Sigmoid colon (tissue), 7 donors: ENCODE measurements at regions of chr1 and their contacts with region 1.

Region 1: DNA sequence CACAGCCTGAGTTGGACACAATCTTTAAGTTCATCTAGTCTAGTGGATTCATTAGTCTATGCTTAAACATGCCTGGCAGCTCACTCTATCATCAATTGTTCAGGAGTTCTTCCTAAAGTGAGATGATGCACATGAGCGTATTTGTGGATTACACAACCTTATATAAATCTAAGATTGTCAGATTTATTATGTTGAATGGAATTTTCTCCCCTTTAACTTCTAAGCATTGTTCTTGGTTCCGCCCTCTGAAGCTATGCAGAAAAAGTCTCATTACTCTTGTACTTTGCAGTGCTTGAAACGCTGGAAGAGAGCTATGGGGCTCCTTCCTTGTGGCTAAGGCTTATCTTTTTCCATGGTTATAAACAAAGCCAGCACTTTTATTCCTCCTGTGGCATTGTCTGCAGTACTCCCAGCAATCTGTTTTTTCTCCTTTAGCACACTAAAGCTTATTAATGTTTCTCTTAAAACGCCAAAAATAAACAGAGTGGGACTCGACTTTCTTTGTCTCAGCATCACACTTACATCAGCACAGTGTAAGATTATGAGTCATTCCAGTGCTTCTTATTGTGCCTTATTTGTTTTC is 316.8 kb upstream of the CAMK1G start:
- DNase-seq: no peak
- H3K4me3 ChIP-seq: no peak overlapping the region
- H3K27ac ChIP-seq: peak overlapping the region in 2 of 4 donors; percentile 37 to 48
- H3K4me1 ChIP-seq: peaks cover 0 to 21% (median 7%) of the 10 kb centered on the region in 4 donors
- H3K27me3 ChIP-seq: no peaks in the 10 kb centered on the region
- CTCF ChIP-seq: no peak
- EP300 ChIP-seq: peak in 1 of 4 donors; percentile 40
- POLR2A ChIP-seq: no peak

Region 2: GRCh38 chr1:208595745-208596144 is 670.9 kb before region 1 on chr1:
- intact Hi-C with region 1: no loop called
- DNase-seq: no peak
- H3K4me3 ChIP-seq: no peak overlapping the region
- H3K27ac ChIP-seq: no peak overlapping the region
- H3K4me1 ChIP-seq: peaks cover 0 to 8% (median 2%) of the 10 kb centered on the region in 4 donors
- H3K27me3 ChIP-seq: no peaks in the 10 kb centered on the region
- CTCF ChIP-seq: no peak
- EP300 ChIP-seq: no peak
- POLR2A ChIP-seq: no peak

Region 3: GRCh38 chr1:209354111-209354839 is 87.6 kb after region 1 on chr1:
- intact Hi-C with region 1: loop called (anchors 5 kb)
- DNase-seq: peak; percentile 84
- H3K4me3 ChIP-seq: no peak overlapping the region
- H3K27ac ChIP-seq: no peak overlapping the region
- H3K4me1 ChIP-seq: peaks cover 0 to 27% (median 12%) of the 10 kb centered on the region in 4 donors
- H3K27me3 ChIP-seq: no peaks in the 10 kb centered on the region
- CTCF ChIP-seq: peak; percentile 35 to 81 (median 60)
- EP300 ChIP-seq: no peak
- POLR2A ChIP-seq: no peak